ENCODE measurements at regions of chr7 and their contacts with region 1.

Region 1: GRCh38 chr7:124765401-124766352 is at the start of gene GPR37:
- DNase-seq: peak; percentile 75 to 98 (median 86)

Region 2: DNA sequence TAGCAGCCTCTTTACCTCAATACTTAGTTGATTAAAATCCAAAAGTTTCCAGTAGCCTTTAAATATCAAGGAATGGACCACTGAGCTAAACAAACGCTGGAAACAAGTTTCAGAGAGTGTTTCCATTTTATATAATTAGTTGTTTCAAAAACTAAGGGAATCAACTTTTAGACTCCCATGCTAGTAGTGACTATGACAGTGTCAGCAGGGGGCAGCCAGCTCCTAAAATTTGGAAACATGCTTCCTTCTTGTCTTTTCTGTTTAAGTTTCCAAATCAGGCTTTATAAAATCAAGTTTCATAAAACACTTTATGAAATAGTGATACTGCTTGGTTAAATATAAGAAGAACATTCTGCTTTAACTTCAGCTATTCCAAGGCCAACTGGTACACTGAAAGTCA is 594.6 kb before region 1 on chr7:
- intact Hi-C with region 1: loop called (anchors 5 kb)
- DNase-seq: peak in 8 of 10 donors; percentile 10 to 90 (median 63)

Region 3: GRCh38 chr7:124649397-124650029 is 116.2 kb before region 1 on chr7:
- intact Hi-C with region 1: loop called (anchors 5 kb)
- DNase-seq: no peak

Region 4: GRCh38 chr7:124701955-124702354 is 63.7 kb before region 1 on chr7:
- intact Hi-C with region 1: loop called (anchors 10 kb)
- DNase-seq: peak in 1 of 10 donors; percentile 27

Region 5: DNA sequence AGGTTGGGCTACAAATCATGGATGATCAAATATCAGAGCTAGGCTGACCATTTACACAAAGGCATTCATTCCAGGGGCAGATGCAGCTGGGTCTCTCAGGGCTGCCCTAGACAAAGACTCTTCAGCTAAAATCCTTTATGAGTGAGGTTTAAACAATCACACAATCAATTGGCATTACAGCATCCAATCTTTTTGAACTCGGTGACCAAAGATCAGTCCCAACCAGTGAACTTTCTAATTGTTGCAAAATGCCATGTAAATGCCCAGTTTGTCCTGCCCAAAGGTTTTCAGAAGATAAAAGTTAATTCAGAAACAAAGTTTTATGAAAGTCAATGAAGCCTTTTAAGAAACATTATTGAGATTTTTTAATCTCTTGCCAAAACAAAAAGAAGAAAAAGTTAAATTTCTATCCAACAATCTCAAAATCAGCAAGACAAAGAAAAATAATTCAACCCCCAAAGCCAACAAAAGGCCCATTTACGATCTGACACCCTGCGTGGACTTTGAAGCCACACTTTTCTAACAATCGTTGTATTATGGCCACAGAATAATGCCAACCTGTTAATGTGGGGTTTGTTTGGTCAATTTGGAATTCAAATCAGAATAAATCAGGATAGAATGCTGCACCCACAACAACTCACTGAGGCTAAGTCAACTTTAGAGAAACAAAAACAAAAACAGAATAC is 41.0 kb before region 1 on chr7:
- intact Hi-C with region 1: loop called (anchors 1 kb)
- DNase-seq: peak in 4 of 10 donors; percentile 38 to 90 (median 47)

Measured in posterior cingulate gyrus (tissue), 11 donors.